HAP-1 (cell line): ENCODE measurements at regions of chr1 and their contacts with region 1.

Region 1: GRCh38 chr1:75265792-75266191 is 131.6 kb downstream of the LHX8 start:
- DNase-seq: peak; percentile 29 to 73
- H3K4me3 ChIP-seq: no peak overlapping the region
- H3K4me1 ChIP-seq: peaks cover 4% of the 10 kb centered on the region
- H3K27me3 ChIP-seq: peaks cover 3% of the 10 kb centered on the region; the same call in 1 of the 2 replicates

Region 2: DNA sequence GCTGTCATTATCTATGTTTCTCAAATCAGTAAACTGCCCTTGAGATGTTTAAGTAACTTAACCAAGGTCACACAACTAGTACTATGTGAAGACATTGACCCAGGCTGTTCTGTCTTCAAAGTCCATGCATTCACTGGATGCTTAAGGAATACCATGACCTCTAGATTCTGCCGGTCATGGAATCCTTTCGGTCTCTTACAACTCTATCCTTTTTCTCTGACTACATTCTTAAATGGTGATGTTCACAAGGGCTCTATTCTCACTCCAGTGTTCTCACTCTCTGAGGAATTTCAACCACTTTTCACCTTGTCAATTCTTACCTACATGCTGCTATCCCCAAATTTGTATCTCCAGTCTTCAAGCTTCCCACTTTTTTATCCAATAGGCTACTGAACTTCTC is 548.2 kb before region 1 on chr1:
- in situ Hi-C with region 1: no loop called
- DNase-seq: no peak
- H3K4me3 ChIP-seq: no peak overlapping the region
- H3K4me1 ChIP-seq: peaks cover 16% of the 10 kb centered on the region
- H3K27me3 ChIP-seq: no peaks in the 10 kb centered on the region

Region 3: DNA sequence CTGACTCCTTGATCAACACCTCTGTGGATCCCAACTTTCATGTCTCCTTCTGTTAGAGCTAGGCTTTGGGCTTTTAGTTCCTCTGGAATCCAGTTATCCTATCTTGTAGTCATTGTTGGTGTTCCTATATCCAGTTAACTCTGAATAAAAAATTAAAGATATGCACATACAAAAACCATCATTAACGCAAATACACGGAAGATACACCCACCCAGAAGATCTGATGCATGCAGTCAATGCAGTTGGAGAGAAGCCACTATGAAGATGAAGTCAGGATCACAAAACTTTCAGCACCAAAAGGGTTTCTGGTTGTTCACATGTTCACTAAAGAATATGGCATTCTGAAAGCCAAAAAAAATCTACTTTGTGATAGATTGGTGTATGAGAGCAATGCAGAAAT is 255.2 kb before region 1 on chr1:
- in situ Hi-C with region 1: no loop called
- DNase-seq: no peak
- H3K4me3 ChIP-seq: no peak overlapping the region
- H3K4me1 ChIP-seq: no peaks in the 10 kb centered on the region
- H3K27me3 ChIP-seq: no peaks in the 10 kb centered on the region

Region 4: DNA sequence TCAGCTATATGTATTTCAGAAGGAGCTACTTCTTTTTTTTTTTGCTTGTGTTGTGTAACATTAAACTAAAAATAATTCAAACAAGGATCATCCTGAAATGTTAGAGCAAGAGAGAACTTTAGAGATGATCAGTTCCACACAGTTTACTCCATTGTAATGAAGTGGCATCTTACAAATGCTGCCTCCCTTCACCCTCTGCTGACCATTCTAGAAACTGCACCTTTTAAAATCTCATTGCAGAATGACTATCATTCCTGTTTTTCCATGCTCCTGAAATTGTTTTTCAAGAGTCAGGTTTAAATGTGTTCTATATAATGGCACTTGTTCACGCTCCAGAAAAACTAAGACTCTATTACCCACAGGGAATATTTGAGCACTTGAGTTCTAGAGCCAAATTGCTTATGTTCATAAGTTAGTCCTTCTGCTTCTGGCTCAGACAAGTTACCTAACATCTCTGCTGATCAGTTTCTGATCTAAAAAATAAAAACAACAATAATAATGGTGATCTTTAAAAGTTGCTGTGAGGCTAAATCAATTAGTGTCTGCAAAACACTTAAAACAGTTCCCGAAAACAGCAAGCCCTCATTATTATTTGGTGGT is 366.7 kb after region 1 on chr1:
- in situ Hi-C with region 1: loop called (anchors 25 kb)
- DNase-seq: peak; percentile 42 to 52
- H3K4me3 ChIP-seq: no peak overlapping the region
- H3K4me1 ChIP-seq: no peaks in the 10 kb centered on the region
- H3K27me3 ChIP-seq: peaks cover 6% of the 10 kb centered on the region; the same call in 1 of the 2 replicates